ENCODE measurements at regions of chr1 and their contacts with region 1.

Region 1: GRCh38 chr1:179081687-179082332 is at the start of gene TOR3A:
- DNase-seq: peak; percentile 87
- ATAC-seq: peak; percentile 78
- H3K4me3 Mint-ChIP-seq: peak within 1 kb of the TSS; percentile 94
- H3K27ac Mint-ChIP-seq: peak within 1 kb of the TSS; percentile 94
- H3K4me1 Mint-ChIP-seq: peaks cover 24% of the 10 kb centered on the region
- H3K27me3 Mint-ChIP-seq: no peaks in the 10 kb centered on the region
- total RNA-seq, gene TOR3A: 29.4 TPM

Region 2: GRCh38 chr1:178587975-178588374 is 493.8 kb before region 1 on chr1:
- CTCF ChIA-PET with region 1: no interaction called
- POLR2A ChIA-PET with region 1: no interaction called
- intact Hi-C with region 1: no loop called
- DNase-seq: no peak
- ATAC-seq: no peak
- H3K4me3 Mint-ChIP-seq: no peak overlapping the region
- H3K27ac Mint-ChIP-seq: no peak overlapping the region
- H3K4me1 Mint-ChIP-seq: no peaks in the 10 kb centered on the region
- H3K27me3 Mint-ChIP-seq: peaks cover 16% of the 10 kb centered on the region

Region 3: GRCh38 chr1:178953034-178953433 is 128.8 kb before region 1 on chr1:
- CTCF ChIA-PET with region 1: no interaction called
- POLR2A ChIA-PET with region 1: no interaction called
- intact Hi-C with region 1: no loop called
- DNase-seq: no peak
- ATAC-seq: no peak
- H3K4me3 Mint-ChIP-seq: no peak overlapping the region
- H3K27ac Mint-ChIP-seq: no peak overlapping the region
- H3K4me1 Mint-ChIP-seq: no peaks in the 10 kb centered on the region
- H3K27me3 Mint-ChIP-seq: no peaks in the 10 kb centered on the region

Region 4: DNA sequence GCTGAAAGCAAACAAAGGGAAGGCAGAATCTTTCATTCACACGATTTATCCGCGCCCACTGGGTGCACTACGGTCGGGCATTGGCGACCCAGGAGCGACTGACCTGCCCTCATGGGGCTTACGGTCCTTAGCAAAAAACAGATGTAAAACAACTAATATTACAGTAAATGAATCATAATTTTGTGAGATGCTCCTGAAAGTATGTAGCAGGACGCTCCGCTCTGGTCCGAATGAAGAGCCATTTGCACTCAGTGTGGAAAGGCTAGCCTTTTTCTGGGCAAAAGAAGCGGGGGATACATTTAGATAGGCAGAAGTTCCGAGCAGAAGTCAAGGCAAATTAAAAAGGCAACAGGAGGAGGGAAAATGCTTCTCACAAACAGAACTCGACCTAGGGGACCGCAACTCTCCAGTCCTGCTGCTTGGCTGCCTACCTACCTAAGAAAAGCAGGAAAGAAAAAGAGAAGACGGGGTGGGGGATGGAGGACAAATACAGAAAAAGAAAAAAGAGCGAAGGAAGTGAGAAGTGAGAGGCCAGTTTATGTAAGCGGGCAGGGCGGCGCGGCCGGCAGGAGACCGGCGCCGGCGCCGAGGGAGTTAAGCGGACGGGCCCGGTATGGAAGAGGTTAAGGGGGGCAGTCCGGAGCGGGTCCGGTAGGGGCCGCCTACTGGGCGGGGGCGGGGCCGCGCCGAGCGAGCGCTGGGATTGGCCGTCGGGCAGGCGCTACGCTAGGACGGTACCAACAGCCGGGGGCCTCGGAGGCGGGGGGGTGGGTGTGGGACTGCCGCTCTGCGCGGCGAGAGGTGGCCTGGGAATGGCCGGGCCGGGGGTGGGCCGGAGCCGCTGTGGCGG is 56.5 kb before region 1 on chr1 and contains the start of gene FAM20B:
- CTCF ChIA-PET with region 1: interaction called, 3 read pairs
- POLR2A ChIA-PET with region 1: no interaction called
- intact Hi-C with region 1: loop called (anchors 1 to 5 kb)
- DNase-seq: peak; percentile 93
- ATAC-seq: peak; percentile 85
- H3K4me3 Mint-ChIP-seq: peak within 1 kb of the TSS; percentile 87
- H3K27ac Mint-ChIP-seq: peak within 1 kb of the TSS; percentile 87
- H3K4me1 Mint-ChIP-seq: peaks cover 39% of the 10 kb centered on the region
- H3K27me3 Mint-ChIP-seq: no peaks in the 10 kb centered on the region
- total RNA-seq, gene FAM20B: 21.7 to 35.8 TPM

Region 5: GRCh38 chr1:179129702-179130473 is 48.1 kb after region 1 on chr1:
- CTCF ChIA-PET with region 1: interaction called, 3 read pairs
- POLR2A ChIA-PET with region 1: no interaction called
- intact Hi-C with region 1: loop called in 1 of 2 experiments (anchors 1 kb)
- DNase-seq: peak; percentile 31
- ATAC-seq: peak; percentile 97
- H3K4me3 Mint-ChIP-seq: peak overlapping the region; percentile 61
- H3K27ac Mint-ChIP-seq: peak overlapping the region; percentile 92
- H3K4me1 Mint-ChIP-seq: peaks cover 39% of the 10 kb centered on the region
- H3K27me3 Mint-ChIP-seq: no peaks in the 10 kb centered on the region

Region 6: DNA sequence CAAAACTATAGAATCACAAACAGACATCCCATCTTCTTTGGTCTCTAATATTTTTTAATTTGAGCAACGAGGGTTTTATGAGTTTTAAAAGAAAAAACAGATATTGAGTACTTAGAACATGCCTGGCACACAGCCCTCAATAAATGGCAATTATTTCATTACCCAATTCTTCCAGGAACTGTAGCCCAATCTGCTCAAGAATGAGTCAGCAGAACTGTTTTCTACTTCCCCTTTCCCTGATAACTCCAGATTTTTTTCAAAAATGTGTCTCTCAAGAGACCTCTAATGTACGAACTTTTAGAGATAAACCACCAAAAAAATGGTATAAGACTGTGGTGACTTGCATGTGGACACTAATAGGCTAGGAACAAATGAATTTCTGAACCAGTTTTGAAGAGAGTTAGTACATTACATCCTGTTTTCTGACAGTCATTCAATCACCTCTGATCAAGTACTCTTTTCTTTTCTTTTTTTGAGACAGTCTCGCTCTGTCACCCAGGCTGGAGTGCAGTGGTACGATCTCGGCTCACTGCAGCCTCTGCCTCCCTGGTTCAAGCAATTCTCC is 136.2 kb after region 1 on chr1:
- CTCF ChIA-PET with region 1: no interaction called
- POLR2A ChIA-PET with region 1: no interaction called
- intact Hi-C with region 1: no loop called
- DNase-seq: no peak
- ATAC-seq: no peak
- H3K4me3 Mint-ChIP-seq: no peak overlapping the region
- H3K27ac Mint-ChIP-seq: peak overlapping the region; percentile 8
- H3K4me1 Mint-ChIP-seq: peaks cover 22% of the 10 kb centered on the region
- H3K27me3 Mint-ChIP-seq: no peaks in the 10 kb centered on the region

Region 7: GRCh38 chr1:179293340-179294327 is 211.8 kb after region 1 on chr1 and contains the start of gene SOAT1:
- CTCF ChIA-PET with region 1: interaction called, 4 read pairs
- POLR2A ChIA-PET with region 1: interaction called, 3 read pairs
- intact Hi-C with region 1: loop called (anchors 1 to 2 kb)
- DNase-seq: peak; percentile 96
- ATAC-seq: peak; percentile 95
- H3K4me3 Mint-ChIP-seq: peak within 1 kb of the TSS; percentile 77
- H3K27ac Mint-ChIP-seq: peak within 1 kb of the TSS; percentile 91
- H3K4me1 Mint-ChIP-seq: peaks cover 40% of the 10 kb centered on the region
- H3K27me3 Mint-ChIP-seq: no peaks in the 10 kb centered on the region
- total RNA-seq, gene SOAT1: 49.8 to 52.0 TPM

Region 8: DNA sequence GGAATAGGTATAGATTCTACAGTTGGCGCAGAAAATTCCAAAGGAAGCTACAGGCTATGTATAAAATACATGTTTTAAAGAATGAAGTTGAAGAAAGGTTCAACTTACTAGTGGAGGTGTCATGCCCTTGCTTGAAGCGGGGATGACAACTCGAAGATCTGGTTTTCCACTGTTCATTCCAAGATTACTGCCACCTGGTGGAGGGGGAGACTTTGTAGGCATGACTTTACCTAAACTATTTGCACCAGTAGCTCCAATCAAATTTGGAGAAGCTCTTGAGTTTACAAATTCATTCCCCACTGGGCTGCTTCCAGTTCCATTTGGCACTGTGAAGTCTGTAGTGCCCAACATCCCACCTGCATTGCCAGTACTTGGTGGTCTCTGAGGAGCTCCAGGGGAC is 365.7 kb after region 1 on chr1:
- CTCF ChIA-PET with region 1: no interaction called
- POLR2A ChIA-PET with region 1: no interaction called
- intact Hi-C with region 1: loop called in 1 of 2 experiments (anchors 2 kb)
- DNase-seq: peak; percentile 22
- ATAC-seq: no peak
- H3K4me3 Mint-ChIP-seq: no peak overlapping the region
- H3K27ac Mint-ChIP-seq: no peak overlapping the region
- H3K4me1 Mint-ChIP-seq: no peaks in the 10 kb centered on the region
- H3K27me3 Mint-ChIP-seq: peaks cover 13% of the 10 kb centered on the region

Region 9: GRCh38 chr1:179882243-179883039 is 800.6 kb after region 1 on chr1 and contains the start of gene TOR1AIP1:
- CTCF ChIA-PET with region 1: no interaction called
- POLR2A ChIA-PET with region 1: interaction called, 3 read pairs
- intact Hi-C with region 1: loop called in 1 of 2 experiments (anchors 1 kb)
- DNase-seq: peak; percentile 98
- ATAC-seq: peak; percentile 80
- H3K4me3 Mint-ChIP-seq: peak within 1 kb of the TSS; percentile 87
- H3K27ac Mint-ChIP-seq: peak within 1 kb of the TSS; percentile 98
- H3K4me1 Mint-ChIP-seq: peaks cover 59% of the 10 kb centered on the region
- H3K27me3 Mint-ChIP-seq: no peaks in the 10 kb centered on the region
- total RNA-seq, gene TOR1AIP1: 50.1 to 71.6 TPM